Esophagus muscularis mucosa (tissue), 4 donors: ENCODE measurements at regions of chr16 and their contacts with region 1.

Region 1: GRCh38 chr16:73172241-73172972 is 124.5 kb upstream of the ZFHX3 start:
- DNase-seq: no peak
- H3K4me3 ChIP-seq: no peak overlapping the region
- H3K27ac ChIP-seq: peak overlapping the region; percentile 55 to 71 (median 62)
- H3K4me1 ChIP-seq: peaks cover 11 to 25% (median 21%) of the 10 kb centered on the region in 4 donors
- H3K27me3 ChIP-seq: no peaks in the 10 kb centered on the region
- CTCF ChIP-seq: peak in 1 of 3 experiments; percentile 23
- EP300 ChIP-seq: no peak
- POLR2A ChIP-seq: no peak

Region 2: DNA sequence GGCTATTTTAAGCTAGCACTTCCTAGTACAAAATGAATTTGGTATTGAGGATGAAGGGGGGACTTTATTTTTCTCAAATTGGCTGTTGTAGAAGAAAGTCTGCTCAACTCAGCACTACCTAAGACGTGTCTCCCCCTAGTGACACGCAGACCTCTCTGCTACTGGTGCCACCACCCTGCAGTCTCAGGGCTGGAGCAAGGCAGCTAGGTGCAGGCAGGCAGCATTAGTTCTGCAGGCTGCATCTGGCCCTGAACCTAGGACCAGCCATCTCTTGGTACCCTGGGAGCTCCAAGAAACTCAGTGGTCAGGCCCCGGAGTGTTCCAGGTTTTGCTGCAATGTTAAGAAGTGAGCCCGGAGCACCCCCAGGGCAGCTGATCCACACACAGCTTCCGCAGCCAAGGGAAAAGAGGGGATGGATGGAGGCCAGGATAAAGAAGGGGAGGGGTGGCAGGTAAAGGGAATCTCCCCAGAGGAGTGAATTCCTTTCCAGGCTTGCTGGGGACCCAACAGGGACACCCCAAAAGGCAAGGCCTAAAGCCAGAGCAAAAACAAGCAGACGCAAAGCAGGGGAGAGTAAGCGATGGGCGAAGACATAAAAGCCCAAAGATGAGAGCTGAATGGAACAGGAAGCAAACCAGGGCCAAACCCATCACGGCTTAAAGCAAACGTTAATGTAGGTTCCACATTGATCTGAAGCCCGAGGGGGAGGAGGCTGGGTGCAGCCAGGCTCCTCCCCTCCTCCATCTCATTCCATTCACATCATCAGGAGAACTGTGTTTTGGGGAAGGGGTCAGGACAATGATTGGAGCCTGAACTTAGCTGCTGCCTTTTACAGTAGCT is 325.0 kb before region 1 on chr16:
- intact Hi-C with region 1: loop called (anchors 5 kb)
- DNase-seq: no peak
- H3K4me3 ChIP-seq: no peak overlapping the region
- H3K27ac ChIP-seq: peak overlapping the region; percentile 16 to 72 (median 68)
- H3K4me1 ChIP-seq: peaks cover 48 to 70% (median 60%) of the 10 kb centered on the region in 4 donors
- H3K27me3 ChIP-seq: no peaks in the 10 kb centered on the region
- CTCF ChIP-seq: peak in 1 of 3 experiments; percentile 31
- EP300 ChIP-seq: no peak
- POLR2A ChIP-seq: no peak

Region 3: GRCh38 chr16:73071131-73071940 is 101.1 kb before region 1 on chr16:
- intact Hi-C with region 1: loop called (anchors 10 kb)
- DNase-seq: no peak
- H3K4me3 ChIP-seq: peak overlapping the region; percentile 39 to 56 (median 44)
- H3K27ac ChIP-seq: peak overlapping the region; percentile 73 to 87 (median 86)
- H3K4me1 ChIP-seq: peaks cover 48 to 56% (median 54%) of the 10 kb centered on the region in 4 donors
- H3K27me3 ChIP-seq: peaks cover 0 to 11% (median 5%) of the 10 kb centered on the region in 4 donors
- CTCF ChIP-seq: no peak
- EP300 ChIP-seq: no peak
- POLR2A ChIP-seq: no peak

Region 4: GRCh38 chr16:73214825-73215677 is 42.6 kb after region 1 on chr16:
- intact Hi-C with region 1: no loop called
- DNase-seq: no peak
- H3K4me3 ChIP-seq: no peak overlapping the region
- H3K27ac ChIP-seq: peak overlapping the region in 2 of 4 donors; percentile 38 to 48
- H3K4me1 ChIP-seq: no peaks in the 10 kb centered on the region
- H3K27me3 ChIP-seq: no peaks in the 10 kb centered on the region
- CTCF ChIP-seq: no peak
- EP300 ChIP-seq: no peak
- POLR2A ChIP-seq: no peak